ENCODE measurements at regions of chr17 and their contacts with region 1.

Region 1: GRCh38 chr17:42153919-42154742 is 658 bp downstream of the RAB5C start:
- DNase-seq: peak; percentile 69
- H3K4me3 Mint-ChIP-seq: peak overlapping the region; percentile 84
- H3K27ac Mint-ChIP-seq: peak overlapping the region; percentile 57
- H3K4me1 Mint-ChIP-seq: peaks cover 32% of the 10 kb centered on the region
- H3K27me3 Mint-ChIP-seq: no peaks in the 10 kb centered on the region

Region 2: GRCh38 chr17:41918314-41919164 is 235.6 kb before region 1 on chr17 and contains the start of gene ACLY:
- intact Hi-C with region 1: loop called (anchors 1 kb)
- DNase-seq: peak; percentile 100
- H3K4me3 Mint-ChIP-seq: peak within 1 kb of the TSS; percentile 98
- H3K27ac Mint-ChIP-seq: peak within 1 kb of the TSS; percentile 95
- H3K4me1 Mint-ChIP-seq: peaks cover 26% of the 10 kb centered on the region
- H3K27me3 Mint-ChIP-seq: no peaks in the 10 kb centered on the region
- total RNA-seq, gene ACLY: 225 and 229 TPM in 2 replicates

Region 3: GRCh38 chr17:42019509-42020404 is 134.4 kb before region 1 on chr17 and contains the start of gene NKIRAS2:
- intact Hi-C with region 1: loop called (anchors 2 kb)
- DNase-seq: peak; percentile 99
- H3K4me3 Mint-ChIP-seq: peak within 1 kb of the TSS; percentile 99
- H3K27ac Mint-ChIP-seq: peak within 1 kb of the TSS; percentile 85
- H3K4me1 Mint-ChIP-seq: peaks cover 47% of the 10 kb centered on the region
- H3K27me3 Mint-ChIP-seq: no peaks in the 10 kb centered on the region
- total RNA-seq, gene NKIRAS2: 29.5 and 30.3 TPM in 2 replicates

Region 4: GRCh38 chr17:42120770-42121769 is 33.1 kb before region 1 on chr17 and contains the start of gene KAT2A:
- intact Hi-C with region 1: loop called (anchors 1 kb)
- DNase-seq: peak; percentile 94
- H3K4me3 Mint-ChIP-seq: peak within 1 kb of the TSS; percentile 76
- H3K27ac Mint-ChIP-seq: peak within 1 kb of the TSS; percentile 87
- H3K4me1 Mint-ChIP-seq: peaks cover 25% of the 10 kb centered on the region
- H3K27me3 Mint-ChIP-seq: no peaks in the 10 kb centered on the region
- total RNA-seq, gene KAT2A: 76.6 and 77.4 TPM in 2 replicates

Region 5: DNA sequence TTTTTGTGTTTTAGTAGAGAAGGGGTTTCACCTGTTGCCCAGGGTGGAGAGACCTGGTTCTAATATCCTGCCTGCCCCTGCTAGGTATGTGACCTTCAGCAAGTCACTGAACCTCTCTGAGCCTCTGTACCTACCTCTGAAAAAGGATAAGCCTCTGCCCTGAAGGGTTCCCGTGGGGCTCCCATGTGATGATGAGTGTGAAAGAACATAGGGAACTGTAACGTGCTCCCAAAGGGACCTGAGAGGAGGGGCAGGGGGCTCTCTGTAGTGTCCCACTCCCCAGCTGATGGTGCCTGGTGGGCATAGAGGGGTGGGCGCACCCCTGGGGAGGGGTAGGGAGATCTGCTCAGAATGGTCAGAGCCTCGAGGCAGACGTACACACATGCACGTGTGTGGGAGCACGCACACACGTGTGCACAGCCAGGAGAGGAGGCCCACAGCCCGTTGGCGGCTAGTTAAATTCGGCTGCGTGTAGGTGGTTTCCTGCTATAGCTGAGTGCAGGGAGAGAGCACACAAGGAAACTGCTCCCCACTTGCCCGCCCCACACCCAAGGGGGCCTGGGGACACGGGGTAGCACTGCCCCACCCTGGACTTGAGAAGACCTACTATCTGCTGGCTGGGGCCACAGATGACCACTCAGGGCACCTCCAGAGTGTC is 20.1 kb after region 1 on chr17:
- intact Hi-C with region 1: no loop called
- DNase-seq: no peak
- H3K4me3 Mint-ChIP-seq: no peak overlapping the region
- H3K27ac Mint-ChIP-seq: no peak overlapping the region
- H3K4me1 Mint-ChIP-seq: peaks cover 15% of the 10 kb centered on the region
- H3K27me3 Mint-ChIP-seq: peaks cover 11% of the 10 kb centered on the region

Region 6: GRCh38 chr17:42193969-42194899 is 40.1 kb after region 1 on chr17 and contains the start of gene GHDC:
- intact Hi-C with region 1: loop called (anchors 1 kb)
- DNase-seq: peak; percentile 95
- H3K4me3 Mint-ChIP-seq: peak within 1 kb of the TSS; percentile 89
- H3K27ac Mint-ChIP-seq: peak within 1 kb of the TSS; percentile 84
- H3K4me1 Mint-ChIP-seq: peaks cover 14% of the 10 kb centered on the region
- H3K27me3 Mint-ChIP-seq: no peaks in the 10 kb centered on the region
- total RNA-seq, gene GHDC: 14.4 and 17.5 TPM in 2 replicates

Measured in activated CD4-positive, alpha-beta T cell treated with anti-CD3 and anti-CD28 coated beads, Interleukin-2, amount 10 ng/mL, durations not matched to agents 24 days and 14 days (primary cell).